Ascending aorta (tissue), 2 donors: ENCODE measurements at regions of chr11 and their contacts with region 1.

Region 1: DNA sequence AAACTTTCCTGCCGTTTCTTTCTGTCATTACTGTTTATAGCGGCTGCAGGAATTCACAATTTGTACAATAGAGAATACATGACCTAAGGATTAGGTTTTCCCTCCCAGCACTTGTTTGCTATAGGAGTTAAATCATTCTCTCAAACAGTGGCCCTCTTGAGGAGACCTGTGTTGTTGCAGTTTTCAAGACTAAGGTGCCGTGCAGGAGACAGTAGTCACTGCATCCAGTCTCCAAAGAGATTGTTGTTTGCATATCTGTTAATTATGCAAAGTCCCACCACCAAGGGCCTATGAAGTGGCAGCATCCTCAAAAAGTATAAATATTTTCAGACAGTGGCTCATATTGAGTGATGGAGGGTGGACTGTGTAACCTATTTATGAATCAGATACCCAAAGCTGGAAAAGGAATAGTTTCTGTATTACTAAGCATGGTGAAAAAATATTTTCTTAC is 2.3 kb downstream of the PRSS23 start:
- DNase-seq: no peak
- H3K4me3 ChIP-seq: peak overlapping the region in 1 of 2 donors; percentile 67
- H3K27ac ChIP-seq: peak overlapping the region; percentile 67 to 76
- H3K4me1 ChIP-seq: peaks cover 0 to 16% of the 10 kb centered on the region in 2 donors
- H3K27me3 ChIP-seq: no peaks in the 10 kb centered on the region
- CTCF ChIP-seq: peak in 2 of 3 experiments; percentile 33 to 57

Region 2: DNA sequence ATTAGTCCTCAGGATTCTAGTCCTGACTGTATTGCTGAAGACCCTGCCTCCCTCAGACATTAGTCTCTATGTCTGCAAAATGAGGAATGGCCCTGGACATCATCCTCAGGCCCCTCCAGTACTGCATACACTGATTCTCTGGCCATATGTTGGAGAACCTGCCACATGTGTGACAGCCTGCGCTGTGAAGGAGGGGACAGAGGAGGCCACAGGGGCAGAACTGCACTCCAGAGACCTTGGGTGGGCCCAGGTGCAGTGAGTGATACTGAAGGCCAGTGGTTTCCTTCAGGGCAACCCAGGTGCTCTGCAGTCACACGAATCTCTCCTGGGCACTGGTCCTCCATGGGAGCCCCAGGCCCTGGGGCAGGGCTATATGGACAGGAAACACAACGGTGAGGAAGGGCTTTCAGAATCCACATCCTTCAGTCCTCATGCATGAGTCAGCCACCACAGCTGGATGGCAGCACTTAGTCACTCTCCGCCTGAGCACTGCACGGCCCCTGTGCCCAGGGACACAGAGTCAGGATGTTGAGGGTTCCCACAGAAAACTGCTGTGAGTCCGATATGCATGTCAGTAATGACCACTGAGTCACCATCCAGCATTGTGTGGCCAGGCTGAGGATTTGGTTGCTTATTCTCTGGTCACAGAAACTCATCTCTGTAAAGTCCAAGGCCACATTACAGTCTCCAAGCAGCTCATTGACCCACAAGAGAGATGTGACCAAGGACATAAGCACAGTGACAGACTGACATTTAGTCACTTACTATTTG is 169.9 kb before region 1 on chr11:
- intact Hi-C with region 1: loop called (anchors 5 kb)
- DNase-seq: peak; percentile 35 to 84
- H3K4me3 ChIP-seq: no peak overlapping the region
- H3K27ac ChIP-seq: peak overlapping the region; percentile 37 to 80
- H3K4me1 ChIP-seq: peaks cover 21 to 36% of the 10 kb centered on the region in 2 donors
- H3K27me3 ChIP-seq: no peaks in the 10 kb centered on the region
- CTCF ChIP-seq: peak in 2 of 3 experiments; percentile 32 to 62

Region 3: GRCh38 chr11:87398931-87399330 is 596.3 kb after region 1 on chr11:
- intact Hi-C with region 1: no loop called
- DNase-seq: no peak
- H3K4me3 ChIP-seq: no peak overlapping the region
- H3K27ac ChIP-seq: no peak overlapping the region
- H3K4me1 ChIP-seq: no peaks in the 10 kb centered on the region
- H3K27me3 ChIP-seq: no peaks in the 10 kb centered on the region
- CTCF ChIP-seq: no peak